CD8-positive, alpha-beta T cell (primary cell): ENCODE measurements at regions of chr12 and their contacts with region 1.

Region 1: DNA sequence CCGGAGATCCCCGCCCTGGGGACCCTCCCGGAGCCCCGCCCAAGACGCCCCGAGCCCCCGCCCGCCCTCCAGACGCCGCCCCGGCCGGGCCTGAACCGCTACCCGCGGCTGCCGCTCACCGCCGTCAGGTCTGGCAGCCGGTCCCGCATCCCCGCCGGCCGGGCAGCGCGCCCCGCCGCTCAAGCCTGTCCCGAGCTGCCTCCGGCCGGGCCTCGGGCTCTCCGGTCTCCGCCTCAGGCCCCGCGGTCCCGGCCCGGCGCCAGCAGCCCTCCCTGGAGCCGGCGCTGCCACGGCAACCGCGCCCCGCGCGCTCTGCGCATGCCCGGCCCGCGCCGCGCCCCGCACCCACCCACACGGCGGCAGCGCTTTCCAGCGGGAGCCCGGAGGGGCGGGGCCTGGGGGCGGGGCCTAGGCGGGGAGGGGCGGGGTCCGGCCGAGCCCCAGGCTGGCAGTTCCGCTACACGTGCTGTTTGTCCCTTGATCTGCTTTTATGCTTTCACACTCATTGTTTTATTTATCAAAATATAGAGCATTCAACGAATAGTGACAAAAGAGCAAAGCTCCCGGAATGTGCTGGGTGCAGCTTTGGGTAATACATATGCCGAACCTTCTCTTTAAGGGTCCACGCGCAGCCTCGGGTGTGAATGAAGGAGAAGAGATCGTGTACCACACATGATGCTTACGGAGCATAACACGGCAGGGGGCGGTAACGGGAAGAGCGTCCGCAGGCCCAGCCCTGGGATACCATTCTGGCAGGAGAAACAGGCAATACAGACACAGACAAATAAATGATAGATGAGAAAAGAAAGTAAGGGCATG is at the start of gene STX2:
- DNase-seq: peak; percentile 82 to 95 (median 88)
- ATAC-seq: peak; percentile 95
- H3K4me3 ChIP-seq: peak within 1 kb of the TSS; percentile 62 to 88
- H3K4me3 Mint-ChIP-seq: peak within 1 kb of the TSS; percentile 83
- H3K27ac ChIP-seq: peak within 1 kb of the TSS; percentile 50 to 63
- H3K27ac Mint-ChIP-seq: peak within 1 kb of the TSS; percentile 88
- H3K4me1 ChIP-seq: peaks cover 9% of the 10 kb centered on the region
- H3K4me1 Mint-ChIP-seq: peaks cover 27% of the 10 kb centered on the region
- H3K27me3 ChIP-seq: no peaks in the 10 kb centered on the region
- H3K27me3 Mint-ChIP-seq: no peaks in the 10 kb centered on the region
- CTCF ChIP-seq: peak; percentile 25
- total RNA-seq, gene STX2: 15.8 to 18.2 TPM

Region 2: GRCh38 chr12:130871286-130872178 is 32.4 kb after region 1 on chr12 and contains the start of gene RAN:
- CTCF ChIA-PET with region 1: interaction called, 7 read pairs
- POLR2A ChIA-PET with region 1: interaction called, 5 read pairs
- intact Hi-C with region 1: loop called (anchors 1 kb)
- DNase-seq: peak; percentile 83 to 98 (median 89)
- ATAC-seq: peak; percentile 80
- H3K4me3 ChIP-seq: peak within 1 kb of the TSS; percentile 72 to 82
- H3K4me3 Mint-ChIP-seq: peak within 1 kb of the TSS; percentile 94
- H3K27ac ChIP-seq: peak within 1 kb of the TSS; percentile 84 to 85
- H3K27ac Mint-ChIP-seq: peak within 1 kb of the TSS; percentile 95
- H3K4me1 ChIP-seq: peaks cover 54% of the 10 kb centered on the region
- H3K4me1 Mint-ChIP-seq: peaks cover 65% of the 10 kb centered on the region
- H3K27me3 ChIP-seq: no peaks in the 10 kb centered on the region
- H3K27me3 Mint-ChIP-seq: no peaks in the 10 kb centered on the region
- CTCF ChIP-seq: no peak
- total RNA-seq, gene RAN: 342 to 352 TPM